ENCODE measurements at regions of chr15 and their contacts with region 1.

Region 1: DNA sequence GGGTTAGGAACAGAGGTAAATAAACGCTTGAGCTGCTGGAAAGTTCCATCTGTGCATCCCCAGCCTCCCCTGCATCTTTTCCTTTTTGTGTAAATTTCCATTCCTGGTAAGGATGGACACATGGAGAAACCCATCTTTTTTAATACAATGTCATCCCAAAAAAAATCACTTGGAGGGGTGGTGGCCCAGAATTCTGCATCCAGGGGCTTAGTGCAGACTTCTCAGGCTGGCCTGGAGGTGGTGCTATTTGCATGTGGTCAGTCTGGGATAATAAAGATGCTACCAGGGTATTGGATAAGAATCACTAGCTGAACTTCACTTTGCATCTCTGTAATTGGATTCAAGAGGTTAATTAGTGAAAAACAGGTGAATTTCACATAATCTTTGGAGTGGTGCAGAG is 1.8 kb upstream of the ZSCAN2 start:
- DNase-seq: no peak
- ATAC-seq: no peak

Region 2: GRCh38 chr15:84697236-84697990 is 98.4 kb after region 1 on chr15:
- intact Hi-C with region 1: no loop called
- DNase-seq: no peak
- ATAC-seq: no peak

Region 3: GRCh38 chr15:84863565-84864443 is 264.8 kb after region 1 on chr15:
- intact Hi-C with region 1: no loop called
- DNase-seq: no peak
- ATAC-seq: peak; percentile 40

Region 4: DNA sequence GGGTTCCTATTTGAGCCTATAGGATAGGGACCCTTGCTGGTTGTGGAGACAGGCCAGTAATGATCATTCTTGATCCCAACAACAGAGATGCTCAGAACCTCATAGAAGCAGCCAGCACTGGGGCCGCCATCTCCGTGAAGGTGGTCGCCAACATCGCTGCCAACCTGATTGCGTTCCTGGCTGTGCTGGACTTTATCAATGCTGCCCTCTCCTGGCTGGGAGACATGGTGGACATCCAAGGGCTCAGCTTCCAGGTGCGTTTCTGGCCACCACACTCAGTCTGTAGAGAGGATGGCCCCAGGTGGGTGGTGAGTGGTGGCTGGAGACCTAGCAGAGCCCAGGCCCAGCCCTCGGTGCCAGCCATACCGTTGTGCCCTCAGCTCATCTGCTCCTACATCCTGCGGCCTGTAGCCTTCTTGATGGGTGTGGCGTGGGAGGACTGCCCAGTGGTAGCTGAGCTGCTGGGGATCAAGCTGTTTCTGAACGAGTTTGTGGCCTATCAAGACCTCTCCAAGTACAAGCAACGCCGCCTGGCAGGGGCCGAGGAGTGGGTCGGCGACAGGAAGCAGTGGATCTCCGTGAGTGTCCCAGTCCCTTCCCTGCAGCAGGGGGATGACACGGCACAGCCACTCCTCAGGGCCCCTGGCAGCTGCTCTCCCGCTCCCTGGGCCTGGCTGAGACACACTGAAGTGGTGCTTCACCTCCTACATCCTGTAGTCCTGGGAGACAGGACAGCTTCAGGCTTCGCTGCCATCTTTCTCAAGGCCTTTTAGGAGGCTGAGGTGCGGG is 336.2 kb after region 1 on chr15:
- intact Hi-C with region 1: loop called (anchors 5 kb)
- DNase-seq: no peak
- ATAC-seq: peak; percentile 34